Prostate gland (tissue), 2 donors: ENCODE measurements at regions of chr5 and their contacts with region 1.

Region 1: GRCh38 chr5:14871210-14872069 is at the start of gene ANKH:
- DNase-seq: peak; percentile 79
- H3K4me3 ChIP-seq: peak within 1 kb of the TSS; percentile 84 to 90
- H3K27ac ChIP-seq: peak within 1 kb of the TSS; percentile 94 to 97
- H3K4me1 ChIP-seq: no peaks in the 10 kb centered on the region
- H3K27me3 ChIP-seq: no peaks in the 10 kb centered on the region
- CTCF ChIP-seq: no peak
- POLR2A ChIP-seq: peak; percentile 18
- total RNA-seq, gene ANKH: 76.5 to 106 TPM

Region 2: GRCh38 chr5:14685757-14686156 is 185.7 kb before region 1 on chr5:
- intact Hi-C with region 1: loop called (anchors 10 kb)
- DNase-seq: peak; percentile 49
- H3K4me3 ChIP-seq: no peak overlapping the region
- H3K27ac ChIP-seq: peak overlapping the region; percentile 84 to 90
- H3K4me1 ChIP-seq: peaks cover 25% of the 10 kb centered on the region
- H3K27me3 ChIP-seq: no peaks in the 10 kb centered on the region
- CTCF ChIP-seq: peak; percentile 34 to 87 (median 70)
- POLR2A ChIP-seq: no peak

Region 3: DNA sequence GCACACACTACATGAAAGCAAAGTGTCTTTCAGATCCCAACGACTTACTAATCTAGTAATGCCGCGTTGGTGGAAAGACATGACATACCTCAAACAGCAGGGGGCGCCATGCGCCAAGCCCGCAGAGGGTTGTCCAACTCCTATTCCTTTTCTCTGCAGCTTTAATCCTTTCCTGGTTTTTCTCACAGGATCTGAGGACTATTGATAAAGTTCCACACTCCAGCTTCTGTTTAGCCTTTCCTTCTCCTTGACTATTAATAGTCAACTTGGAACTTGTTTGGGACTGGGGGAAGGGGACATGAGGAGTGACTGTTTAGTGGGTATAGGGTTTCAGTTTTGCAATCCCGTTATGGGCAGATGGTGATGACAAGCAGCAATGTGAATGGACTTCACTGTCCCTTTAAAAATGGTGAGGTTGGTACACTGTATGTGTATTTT is 144.0 kb before region 1 on chr5:
- intact Hi-C with region 1: loop called (anchors 2 kb)
- DNase-seq: peak; percentile 76
- H3K4me3 ChIP-seq: no peak overlapping the region
- H3K27ac ChIP-seq: peak overlapping the region; percentile 19 to 88
- H3K4me1 ChIP-seq: peaks cover 11% of the 10 kb centered on the region
- H3K27me3 ChIP-seq: no peaks in the 10 kb centered on the region
- CTCF ChIP-seq: peak; percentile 90 to 97 (median 95)
- POLR2A ChIP-seq: no peak

Region 4: GRCh38 chr5:14744296-14745187 is 126.9 kb before region 1 on chr5:
- intact Hi-C with region 1: loop called (anchors 5 kb)
- DNase-seq: no peak
- H3K4me3 ChIP-seq: no peak overlapping the region
- H3K27ac ChIP-seq: peak overlapping the region; percentile 57 to 62
- H3K4me1 ChIP-seq: peaks cover 17% of the 10 kb centered on the region
- H3K27me3 ChIP-seq: no peaks in the 10 kb centered on the region
- CTCF ChIP-seq: no peak
- POLR2A ChIP-seq: no peak

Region 5: DNA sequence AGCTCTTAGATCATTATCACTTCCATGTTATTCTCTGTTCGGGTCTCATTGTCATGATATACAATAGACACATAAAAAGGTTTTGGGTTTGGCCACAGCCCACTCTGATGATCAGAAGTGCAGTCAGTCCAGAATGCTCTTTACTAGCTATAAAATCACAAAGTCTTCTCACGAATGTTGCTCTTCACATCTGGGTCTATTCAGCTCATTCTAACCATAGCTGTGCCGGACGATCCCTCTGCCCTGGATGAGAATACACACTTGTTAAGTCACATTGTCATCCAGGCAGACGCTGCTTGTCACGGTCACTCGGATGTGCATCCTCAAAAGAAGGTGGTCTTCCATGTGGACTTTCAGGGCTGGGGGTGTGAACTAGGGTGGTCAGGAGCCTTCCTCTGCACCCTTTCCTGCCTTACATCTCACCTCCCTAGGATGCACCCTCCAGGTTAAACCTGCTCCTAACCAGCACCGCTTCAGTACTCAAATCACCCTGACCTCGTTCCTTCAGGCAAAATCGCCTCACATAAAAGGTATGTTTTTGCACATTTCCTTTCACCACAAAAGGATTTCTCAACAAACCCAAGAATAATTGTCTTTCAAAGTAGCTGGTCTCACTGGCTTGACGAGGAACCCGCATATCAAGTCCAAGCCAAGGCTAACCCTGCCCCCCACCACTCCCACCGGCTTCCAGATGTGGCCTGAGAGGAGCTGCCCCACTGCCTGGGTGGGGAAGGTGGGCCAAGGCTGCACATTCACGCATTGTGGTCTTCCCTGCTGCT is 21.7 kb before region 1 on chr5:
- intact Hi-C with region 1: no loop called
- DNase-seq: no peak
- H3K4me3 ChIP-seq: no peak overlapping the region
- H3K27ac ChIP-seq: peak overlapping the region in 1 of 2 donors; percentile 31
- H3K4me1 ChIP-seq: no peaks in the 10 kb centered on the region
- H3K27me3 ChIP-seq: no peaks in the 10 kb centered on the region
- CTCF ChIP-seq: no peak
- POLR2A ChIP-seq: no peak

Region 6: DNA sequence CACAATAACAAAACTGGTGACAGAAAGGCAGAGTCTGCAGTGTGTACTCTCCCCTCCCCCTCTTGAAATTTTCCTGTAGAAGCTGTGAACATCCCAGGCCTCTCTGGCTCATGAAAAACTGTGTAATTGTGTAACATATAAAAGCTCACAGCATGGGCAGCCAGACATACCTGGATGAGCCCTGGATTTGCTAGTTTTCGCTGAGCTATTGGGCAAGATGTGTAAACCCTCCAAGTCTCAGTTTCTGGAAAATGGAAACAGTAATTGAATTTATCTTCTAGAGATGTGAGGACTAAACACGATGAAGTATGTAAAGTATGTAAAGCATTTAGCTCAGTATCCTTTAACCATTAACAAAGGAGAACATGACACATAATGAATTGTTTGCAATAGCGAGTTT is 143.4 kb after region 1 on chr5:
- intact Hi-C with region 1: loop called (anchors 5 kb)
- DNase-seq: no peak
- H3K4me3 ChIP-seq: no peak overlapping the region
- H3K27ac ChIP-seq: no peak overlapping the region
- H3K4me1 ChIP-seq: peaks cover 3% of the 10 kb centered on the region
- H3K27me3 ChIP-seq: no peaks in the 10 kb centered on the region
- CTCF ChIP-seq: no peak
- POLR2A ChIP-seq: no peak